AG04449 (cell line): ENCODE measurements at regions of chr20 and their contacts with region 1.

Region 1: DNA sequence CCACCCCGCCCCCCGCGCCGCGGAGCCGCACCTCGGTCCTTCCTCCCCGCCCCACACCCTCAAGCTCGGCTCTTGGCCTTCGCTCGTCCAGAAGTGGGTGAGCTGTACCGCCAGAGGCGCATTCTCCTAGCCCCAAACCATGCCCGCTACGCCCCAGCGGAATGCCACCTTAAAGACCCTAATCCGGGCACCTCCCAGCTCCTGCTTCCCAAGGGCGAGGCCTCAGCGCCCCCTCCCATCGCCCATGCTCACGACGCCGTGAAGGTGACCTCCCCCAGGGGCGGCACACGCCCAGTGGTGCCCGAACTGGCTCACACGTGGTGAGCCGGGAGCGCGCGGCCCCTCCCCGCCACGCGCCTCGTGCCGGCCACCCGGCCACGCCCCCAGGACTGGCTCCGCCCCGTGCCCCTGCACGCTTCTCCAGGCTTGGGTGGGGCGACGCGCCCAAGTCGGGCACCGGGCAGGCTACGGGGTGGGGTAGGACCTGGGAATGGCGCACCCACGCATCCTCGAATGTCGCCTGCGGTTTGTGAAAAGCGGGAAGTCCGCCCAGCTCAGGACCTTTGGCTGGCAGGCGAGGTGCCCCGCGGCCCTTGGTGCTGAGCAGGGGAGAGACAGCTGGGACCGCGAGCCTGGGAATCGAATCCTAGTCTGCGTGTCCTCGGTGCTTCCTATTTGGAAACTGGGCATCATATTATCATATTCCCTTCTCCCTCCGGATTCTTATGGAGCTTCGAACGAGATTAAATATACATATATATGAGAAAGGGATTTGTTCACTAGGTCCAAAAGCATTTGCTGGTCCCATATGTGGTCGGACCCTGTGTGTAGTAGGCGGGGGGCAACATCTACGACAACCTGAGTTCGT is 941 bp upstream of the SOX12 start:
- DNase-seq: no peak
- H3K4me3 ChIP-seq: peak overlapping the region; percentile 73
- CTCF ChIP-seq: peak; percentile 46

Region 2: DNA sequence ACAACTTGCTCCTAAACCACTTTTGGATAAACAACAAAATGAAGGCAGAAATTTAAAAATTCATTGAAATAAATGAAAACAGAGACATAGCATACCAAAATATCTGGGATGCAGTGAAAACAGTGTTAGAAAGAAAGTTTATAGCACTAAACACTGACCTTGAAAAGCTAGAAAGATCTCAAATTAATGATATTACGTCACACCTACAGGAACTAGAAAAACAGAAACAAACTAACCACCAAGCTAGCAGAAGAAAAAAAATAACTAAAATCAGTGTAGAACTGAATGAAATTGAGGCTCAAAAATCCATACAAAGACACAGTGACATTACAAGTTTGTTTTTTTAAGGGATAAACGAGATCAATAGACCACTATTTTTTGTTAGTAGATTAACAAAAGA is 140.1 kb before region 1 on chr20:
- CTCF ChIA-PET with region 1: no interaction called
- POLR2A ChIA-PET with region 1: no interaction called
- DNase-seq: no peak
- H3K4me3 ChIP-seq: no peak overlapping the region
- CTCF ChIP-seq: no peak

Region 3: DNA sequence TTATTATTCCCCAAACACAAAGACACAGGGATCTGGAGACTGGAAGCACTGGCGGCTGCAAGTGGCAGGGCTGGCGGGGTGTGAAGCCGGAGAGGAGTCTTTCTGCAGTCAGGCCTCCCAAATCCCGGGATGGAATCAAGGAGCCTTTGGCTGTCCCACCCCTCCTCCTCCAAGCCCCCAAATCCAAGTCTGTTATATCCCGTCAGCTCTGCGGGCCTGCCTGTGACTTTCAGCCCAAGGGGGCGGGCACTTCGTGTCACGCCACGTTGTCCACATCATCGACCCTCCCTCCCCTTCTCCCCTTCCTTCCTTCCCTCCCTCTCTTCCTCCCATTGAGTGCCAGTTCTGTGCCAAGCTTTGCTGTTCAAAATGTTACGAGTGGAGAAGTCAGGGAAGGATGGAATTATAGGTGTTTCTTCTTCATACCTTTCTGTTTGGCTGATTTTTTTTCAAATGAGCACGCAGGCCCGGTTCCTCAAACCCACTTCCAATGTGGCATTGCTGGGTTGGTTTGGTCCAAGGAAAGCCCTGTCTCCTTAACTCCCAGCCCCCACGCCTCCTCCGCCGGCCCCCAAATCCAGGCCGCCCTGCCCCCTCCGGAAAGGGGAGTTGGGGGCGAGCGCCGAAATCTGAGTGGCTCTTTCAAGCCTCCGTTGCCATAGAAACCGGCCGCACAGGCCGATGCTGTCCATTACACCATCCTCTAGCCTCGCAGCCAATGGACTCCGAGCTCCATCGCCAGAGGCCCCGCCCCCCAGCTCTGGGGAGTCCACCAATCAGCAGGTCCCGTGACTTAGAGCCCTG is 14.4 kb before region 1 on chr20:
- CTCF ChIA-PET with region 1: interaction called, 18 read pairs
- POLR2A ChIA-PET with region 1: interaction called, 14 read pairs
- DNase-seq: peak; percentile 95
- H3K4me3 ChIP-seq: peak overlapping the region; percentile 57
- CTCF ChIP-seq: no peak

Region 4: GRCh38 chr20:421685-422290 is 97.4 kb after region 1 on chr20:
- CTCF ChIA-PET with region 1: no interaction called
- POLR2A ChIA-PET with region 1: no interaction called
- DNase-seq: no peak
- H3K4me3 ChIP-seq: no peak overlapping the region
- CTCF ChIP-seq: no peak